SK-N-SH (cell line): ENCODE measurements at regions of chr7 and their contacts with region 1.

Region 1: DNA sequence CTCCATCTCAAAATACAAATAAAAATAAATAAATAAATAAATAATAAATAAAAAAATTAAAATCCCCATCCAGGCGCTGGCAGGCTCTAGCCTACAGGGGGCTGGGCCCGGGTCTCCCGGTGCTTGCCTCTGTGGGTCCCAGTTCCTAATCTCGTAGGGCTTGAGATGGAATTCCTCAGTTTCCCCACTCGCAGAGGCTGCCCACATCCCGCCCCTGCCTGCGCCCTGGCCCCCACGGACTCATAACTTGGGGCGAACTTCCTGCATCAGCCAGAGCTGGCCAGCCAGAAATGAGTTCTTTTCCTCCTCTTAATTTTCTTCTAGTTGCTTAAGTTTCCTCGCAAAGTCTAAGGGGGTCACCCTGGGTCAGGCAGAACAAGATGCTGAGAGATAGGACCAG is 22.0 kb upstream of the SRRM3 start:
- DNase-seq: no peak
- H3K4me3 ChIP-seq: no peak overlapping the region
- H3K27ac ChIP-seq: no peak overlapping the region
- H3K4me1 ChIP-seq: peaks cover 0 to 2% of the 10 kb centered on the region in 2 experiments; a peak in 1 of 4 replicates
- H3K27me3 ChIP-seq: no peaks in the 10 kb centered on the region
- CTCF ChIP-seq: no peak
- EP300 ChIP-seq: no peak
- RAD21 ChIP-seq: no peak

Region 2: GRCh38 chr7:75814407-75814947 is 365.2 kb before region 1 on chr7:
- CTCF ChIA-PET with region 1: no interaction called
- POLR2A ChIA-PET with region 1: no interaction called
- DNase-seq: no peak
- H3K4me3 ChIP-seq: no peak overlapping the region
- H3K27ac ChIP-seq: no peak overlapping the region
- H3K4me1 ChIP-seq: no peaks in the 10 kb centered on the region
- H3K27me3 ChIP-seq: no peaks in the 10 kb centered on the region
- CTCF ChIP-seq: no peak
- EP300 ChIP-seq: no peak
- RAD21 ChIP-seq: no peak

Region 3: DNA sequence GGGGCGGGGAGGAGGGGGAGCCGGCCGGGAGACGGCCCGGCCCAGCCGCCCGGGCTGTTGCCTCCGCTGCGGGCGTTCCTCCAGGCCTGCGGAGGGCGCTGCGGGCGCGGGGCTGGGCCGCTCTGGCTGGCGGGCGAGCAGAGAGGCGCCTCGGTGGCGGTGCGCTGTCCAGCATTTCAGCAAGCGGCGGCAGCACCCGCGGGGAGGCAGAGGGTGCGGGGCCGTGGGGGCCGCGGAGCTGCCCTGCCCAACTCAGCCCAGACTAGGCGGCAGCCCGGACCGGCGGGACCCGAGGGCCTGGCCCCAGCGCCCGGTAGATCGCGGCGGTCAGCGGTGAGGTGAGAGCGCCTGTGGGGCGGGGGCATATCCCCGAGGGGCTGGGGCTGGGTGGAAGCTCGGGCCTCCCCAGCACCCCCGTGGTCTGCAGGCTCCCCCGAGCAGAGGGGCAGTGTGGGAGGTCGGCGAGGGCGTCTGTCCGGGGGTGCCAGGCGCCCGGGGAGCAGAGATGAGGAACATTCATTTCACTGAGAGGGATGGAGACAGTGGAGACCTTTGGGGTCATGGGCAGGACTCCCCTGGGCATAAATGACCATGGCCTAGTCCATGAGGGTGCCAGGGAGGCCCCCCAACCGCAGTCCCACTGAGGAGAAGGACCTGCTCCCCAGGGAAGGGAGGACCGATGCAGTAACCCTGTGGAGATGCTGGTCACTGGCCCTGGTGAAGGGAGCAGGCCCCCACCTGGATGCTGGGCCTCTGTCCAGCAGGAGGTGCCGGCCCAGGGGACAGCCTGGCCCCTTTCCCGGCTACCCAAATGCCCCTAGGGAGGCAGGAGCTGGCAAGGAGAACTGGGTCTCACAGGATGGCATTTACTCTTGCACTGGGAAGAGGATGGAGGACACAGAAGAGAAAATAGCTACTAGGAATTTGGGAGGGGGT is 22.3 kb after region 1 on chr7 and contains the start of gene SRRM3:
- CTCF ChIA-PET with region 1: interaction called, 100 read pairs
- POLR2A ChIA-PET with region 1: interaction called, 15 read pairs
- DNase-seq: peak; percentile 98
- H3K4me3 ChIP-seq: peak within 1 kb of the TSS; percentile 35 to 50; a peak in 3 of 4 replicates
- H3K27ac ChIP-seq: peak within 1 kb of the TSS in 1 of 2 experiments; percentile 75; a peak in 2 of 4 replicates
- H3K4me1 ChIP-seq: peaks cover 0 to 27% of the 10 kb centered on the region in 2 experiments; a peak in 1 of 4 replicates
- H3K27me3 ChIP-seq: peaks cover 25% of the 10 kb centered on the region
- CTCF ChIP-seq: peak; percentile 61
- EP300 ChIP-seq: peak in 1 of 2 experiments; percentile 29; a peak in 1 of 4 replicates
- RAD21 ChIP-seq: peak; percentile 24; the same call in 1 of the 2 replicates
- polyA plus RNA-seq, gene SRRM3: 2.5 and 2.7 TPM in 2 replicates

Region 4: GRCh38 chr7:76234931-76235441 is 55.3 kb after region 1 on chr7:
- CTCF ChIA-PET with region 1: interaction called, 16 read pairs
- POLR2A ChIA-PET with region 1: interaction called, 3 read pairs
- DNase-seq: peak; percentile 100
- H3K4me3 ChIP-seq: peak overlapping the region in 1 of 2 experiments; percentile 19; a peak in 1 of 4 replicates
- H3K27ac ChIP-seq: peak overlapping the region in 1 of 2 experiments; percentile 65; a peak in 2 of 4 replicates
- H3K4me1 ChIP-seq: peaks cover 0 to 8% of the 10 kb centered on the region in 2 experiments; a peak in 1 of 4 replicates
- H3K27me3 ChIP-seq: peaks cover 5% of the 10 kb centered on the region; the same call in 1 of the 2 replicates
- CTCF ChIP-seq: no peak
- EP300 ChIP-seq: no peak
- RAD21 ChIP-seq: no peak

Region 5: GRCh38 chr7:76262683-76263402 is 83.2 kb after region 1 on chr7:
- CTCF ChIA-PET with region 1: interaction called, 289 read pairs
- POLR2A ChIA-PET with region 1: interaction called, 17 read pairs
- DNase-seq: peak; percentile 88
- H3K4me3 ChIP-seq: no peak overlapping the region; a peak in 1 of 4 replicates
- H3K27ac ChIP-seq: no peak overlapping the region
- H3K4me1 ChIP-seq: peaks cover 0 to 4% of the 10 kb centered on the region in 2 experiments; a peak in 1 of 4 replicates
- H3K27me3 ChIP-seq: no peaks in the 10 kb centered on the region
- CTCF ChIP-seq: peak; percentile 95
- EP300 ChIP-seq: no peak
- RAD21 ChIP-seq: peak; percentile 99

Region 6: GRCh38 chr7:76291343-76292212 is 111.9 kb after region 1 on chr7:
- CTCF ChIA-PET with region 1: interaction called, 88 read pairs
- POLR2A ChIA-PET with region 1: no interaction called
- DNase-seq: peak; percentile 92
- H3K4me3 ChIP-seq: peak overlapping the region in 1 of 2 experiments; percentile 0; a peak in 1 of 4 replicates
- H3K27ac ChIP-seq: peak overlapping the region; percentile 67 to 91
- H3K4me1 ChIP-seq: peaks cover 26 to 36% of the 10 kb centered on the region in 2 experiments; a peak in 3 of 4 replicates
- H3K27me3 ChIP-seq: no peaks in the 10 kb centered on the region
- CTCF ChIP-seq: peak; percentile 99
- EP300 ChIP-seq: peak; percentile 18 to 56; a peak in 2 of 4 replicates
- RAD21 ChIP-seq: peak; percentile 98